Naive thymus-derived CD4-positive, alpha-beta T cell (primary cell): ENCODE measurements at regions of chr5 and their contacts with region 1.

Region 1: GRCh38 chr5:91225848-91226686 is 157.1 kb downstream of the ARRDC3 start:
- DNase-seq: peak; percentile 16 to 60 (median 46)
- ATAC-seq: peak; percentile 67
- H3K4me3 ChIP-seq: no peak overlapping the region
- H3K4me3 Mint-ChIP-seq: no peak overlapping the region
- H3K27ac ChIP-seq: no peak overlapping the region
- H3K27ac Mint-ChIP-seq: no peak overlapping the region
- H3K4me1 ChIP-seq: no peaks in the 10 kb centered on the region
- H3K4me1 Mint-ChIP-seq: no peaks in the 10 kb centered on the region
- H3K27me3 ChIP-seq: no peaks in the 10 kb centered on the region
- H3K27me3 Mint-ChIP-seq: peaks cover 0 to 15% (median 6%) of the 10 kb centered on the region in 5 donors

Region 2: DNA sequence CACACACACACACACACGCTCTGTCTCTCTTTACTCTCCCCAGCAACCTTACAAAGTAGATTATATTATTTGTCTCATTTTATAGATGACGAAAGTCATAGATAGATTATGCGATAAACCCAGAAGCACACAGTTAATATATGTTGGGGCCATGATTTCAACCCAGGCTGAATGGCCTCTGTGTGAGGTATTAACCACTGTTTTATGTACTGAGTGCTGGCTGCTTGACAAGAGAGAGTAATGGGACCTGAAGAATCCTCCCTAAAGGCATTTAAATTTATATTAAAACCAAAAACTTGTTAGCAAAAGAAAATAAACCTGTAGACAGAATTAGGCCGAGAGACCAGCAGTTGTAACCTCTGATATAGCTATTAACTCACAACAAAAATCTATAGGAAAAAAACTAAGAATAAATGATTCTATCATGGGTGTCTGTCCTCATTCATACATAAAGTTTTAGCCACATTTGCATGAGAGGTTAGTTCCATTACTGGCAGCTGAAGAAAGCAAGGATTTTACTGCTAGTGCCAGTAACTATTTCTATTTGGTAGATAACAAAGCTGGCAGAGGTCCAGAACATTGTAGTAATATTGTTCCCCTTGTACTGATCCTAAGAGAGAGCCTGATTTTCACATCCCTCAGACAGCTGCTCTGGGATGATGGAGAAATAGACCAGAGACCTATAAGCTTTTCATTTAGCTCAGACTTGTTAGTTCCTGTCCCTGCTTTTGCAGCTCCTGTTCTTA is 416.6 kb before region 1 on chr5:
- CTCF ChIA-PET with region 1: no interaction called
- POLR2A ChIA-PET with region 1: no interaction called
- intact Hi-C with region 1: no loop called
- DNase-seq: no peak
- ATAC-seq: no peak
- H3K4me3 ChIP-seq: no peak overlapping the region
- H3K4me3 Mint-ChIP-seq: no peak overlapping the region
- H3K27ac ChIP-seq: no peak overlapping the region
- H3K27ac Mint-ChIP-seq: no peak overlapping the region
- H3K4me1 ChIP-seq: no peaks in the 10 kb centered on the region
- H3K4me1 Mint-ChIP-seq: no peaks in the 10 kb centered on the region
- H3K27me3 ChIP-seq: no peaks in the 10 kb centered on the region
- H3K27me3 Mint-ChIP-seq: peaks cover 0 to 10% (median 0%) of the 10 kb centered on the region in 5 donors

Region 3: DNA sequence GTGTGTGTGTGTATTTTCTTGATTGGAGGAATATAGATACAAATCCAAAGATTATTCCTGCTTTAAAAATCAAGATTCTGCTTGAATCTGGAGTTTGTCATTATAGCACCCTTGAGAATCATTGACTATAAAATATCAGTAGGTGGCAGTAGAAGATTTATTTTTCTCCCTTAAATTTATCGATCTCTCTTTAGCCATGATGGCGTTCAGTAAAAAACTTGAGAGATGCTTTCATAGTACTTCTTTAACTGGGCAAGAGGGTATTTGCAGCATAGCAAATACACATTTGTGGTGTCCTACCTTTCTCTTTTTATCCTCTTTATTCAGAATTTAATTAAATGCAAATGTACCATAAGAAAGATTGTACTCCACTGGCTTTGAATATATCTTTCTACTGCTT is 359.7 kb before region 1 on chr5:
- CTCF ChIA-PET with region 1: interaction called, 3 read pairs
- POLR2A ChIA-PET with region 1: no interaction called
- intact Hi-C with region 1: loop called in 1 of 2 experiments (anchors 1 kb)
- DNase-seq: peak in 6 of 9 donors; percentile 11 to 49 (median 38)
- ATAC-seq: peak; percentile 60
- H3K4me3 ChIP-seq: no peak overlapping the region
- H3K4me3 Mint-ChIP-seq: no peak overlapping the region
- H3K27ac ChIP-seq: no peak overlapping the region
- H3K27ac Mint-ChIP-seq: no peak overlapping the region
- H3K4me1 ChIP-seq: peaks cover 0 to 6% of the 10 kb centered on the region in 2 donors
- H3K4me1 Mint-ChIP-seq: peaks cover 0 to 19% (median 9%) of the 10 kb centered on the region in 7 donors
- H3K27me3 ChIP-seq: no peaks in the 10 kb centered on the region
- H3K27me3 Mint-ChIP-seq: peaks cover 0 to 16% (median 4%) of the 10 kb centered on the region in 5 donors

Region 4: DNA sequence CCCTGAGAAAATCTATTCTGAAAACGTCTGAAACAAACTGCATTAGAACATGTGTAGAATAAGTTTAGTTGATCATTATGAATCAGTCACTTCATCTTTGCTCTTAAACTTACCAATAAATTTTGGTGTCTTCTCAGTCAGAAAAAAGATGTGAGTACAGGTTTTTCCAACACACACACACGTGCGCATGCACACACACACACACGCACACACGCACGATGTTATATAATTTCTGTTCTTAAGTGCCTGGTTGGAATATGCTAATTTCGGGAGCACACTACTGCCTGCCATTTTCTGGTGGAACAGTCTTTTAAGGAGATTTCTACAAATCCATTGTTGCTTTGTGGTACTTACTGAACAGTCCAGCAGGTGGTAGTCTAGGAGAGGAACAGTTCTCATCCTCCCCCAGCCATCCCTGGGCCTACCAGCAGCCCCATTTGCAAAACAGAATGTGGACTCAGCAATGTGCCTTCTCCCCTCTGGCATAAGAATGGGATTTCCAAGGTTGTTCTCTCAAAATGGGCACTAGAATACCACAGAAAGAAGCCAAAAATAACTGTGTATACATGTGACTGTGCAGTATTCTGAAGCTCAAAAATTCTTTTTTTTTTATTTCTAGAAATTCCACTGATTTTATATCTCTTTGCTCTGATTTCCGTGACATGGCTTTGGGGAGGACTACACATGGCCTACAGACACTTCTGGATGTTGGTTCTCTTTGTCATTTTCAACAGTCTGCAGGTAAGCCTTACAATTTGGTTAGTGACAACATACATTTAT is 124.3 kb before region 1 on chr5:
- CTCF ChIA-PET with region 1: no interaction called
- POLR2A ChIA-PET with region 1: no interaction called
- intact Hi-C with region 1: loop called (anchors 1 to 2 kb)
- DNase-seq: peak; percentile 18 to 50 (median 36)
- ATAC-seq: peak; percentile 95
- H3K4me3 ChIP-seq: no peak overlapping the region
- H3K4me3 Mint-ChIP-seq: no peak overlapping the region
- H3K27ac ChIP-seq: no peak overlapping the region
- H3K27ac Mint-ChIP-seq: peak overlapping the region in 2 of 9 donors; percentile 4 to 18
- H3K4me1 ChIP-seq: no peaks in the 10 kb centered on the region
- H3K4me1 Mint-ChIP-seq: peaks cover 0 to 4% (median 0%) of the 10 kb centered on the region in 7 donors
- H3K27me3 ChIP-seq: no peaks in the 10 kb centered on the region
- H3K27me3 Mint-ChIP-seq: peaks cover 0 to 26% (median 0%) of the 10 kb centered on the region in 5 donors

Region 5: GRCh38 chr5:91194824-91195381 is 31.2 kb before region 1 on chr5:
- CTCF ChIA-PET with region 1: no interaction called
- POLR2A ChIA-PET with region 1: no interaction called
- intact Hi-C with region 1: no loop called
- DNase-seq: no peak
- ATAC-seq: no peak
- H3K4me3 ChIP-seq: no peak overlapping the region
- H3K4me3 Mint-ChIP-seq: no peak overlapping the region
- H3K27ac ChIP-seq: no peak overlapping the region
- H3K27ac Mint-ChIP-seq: no peak overlapping the region
- H3K4me1 ChIP-seq: no peaks in the 10 kb centered on the region
- H3K4me1 Mint-ChIP-seq: no peaks in the 10 kb centered on the region
- H3K27me3 ChIP-seq: no peaks in the 10 kb centered on the region
- H3K27me3 Mint-ChIP-seq: peaks cover 0 to 29% (median 16%) of the 10 kb centered on the region in 5 donors

Region 6: DNA sequence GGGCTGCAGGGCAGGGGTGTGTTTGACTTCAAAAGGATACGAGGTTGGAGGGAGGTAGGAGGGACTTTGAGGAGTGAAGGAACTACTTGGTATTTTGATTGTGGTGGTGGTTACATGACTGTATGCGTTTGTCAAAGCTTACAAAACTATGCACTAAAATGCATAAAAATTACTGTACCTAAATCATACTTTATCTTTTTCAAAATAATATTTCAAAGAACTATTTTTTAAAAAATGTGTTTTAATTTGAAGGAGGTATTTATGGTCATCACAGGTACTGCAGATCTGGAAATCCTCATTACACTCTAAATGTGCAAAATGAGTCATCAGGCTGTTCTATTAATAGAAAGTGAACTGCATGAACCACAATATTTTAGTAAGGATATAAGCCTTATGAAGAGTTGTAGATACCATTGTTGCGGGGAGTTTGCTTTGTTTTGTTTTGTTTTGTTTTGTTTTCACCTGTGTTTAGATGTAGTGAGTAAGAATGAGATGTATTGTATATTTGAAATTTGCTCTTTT is 40.2 kb after region 1 on chr5:
- CTCF ChIA-PET with region 1: interaction called, 3 read pairs
- POLR2A ChIA-PET with region 1: no interaction called
- intact Hi-C with region 1: loop called in 1 of 2 experiments (anchors 5 kb)
- DNase-seq: no peak
- ATAC-seq: peak; percentile 53
- H3K4me3 ChIP-seq: no peak overlapping the region
- H3K4me3 Mint-ChIP-seq: no peak overlapping the region
- H3K27ac ChIP-seq: no peak overlapping the region
- H3K27ac Mint-ChIP-seq: no peak overlapping the region
- H3K4me1 ChIP-seq: no peaks in the 10 kb centered on the region
- H3K4me1 Mint-ChIP-seq: peaks cover 9 to 27% (median 18%) of the 10 kb centered on the region in 7 donors
- H3K27me3 ChIP-seq: no peaks in the 10 kb centered on the region
- H3K27me3 Mint-ChIP-seq: peaks cover 0 to 14% (median 0%) of the 10 kb centered on the region in 5 donors

Region 7: GRCh38 chr5:91311697-91312501 is 85.8 kb after region 1 on chr5:
- CTCF ChIA-PET with region 1: no interaction called
- POLR2A ChIA-PET with region 1: interaction called, 3 read pairs
- intact Hi-C with region 1: loop called (anchors 1 kb)
- DNase-seq: peak; percentile 17 to 81 (median 68)
- ATAC-seq: peak; percentile 86
- H3K4me3 ChIP-seq: peak overlapping the region; percentile 15
- H3K4me3 Mint-ChIP-seq: peak overlapping the region; percentile 59 to 82 (median 76)
- H3K27ac ChIP-seq: peak overlapping the region; percentile 53
- H3K27ac Mint-ChIP-seq: peak overlapping the region; percentile 84 to 98 (median 95)
- H3K4me1 ChIP-seq: peaks cover 33 to 39% of the 10 kb centered on the region in 2 donors
- H3K4me1 Mint-ChIP-seq: peaks cover 29 to 55% (median 48%) of the 10 kb centered on the region in 7 donors
- H3K27me3 ChIP-seq: no peaks in the 10 kb centered on the region
- H3K27me3 Mint-ChIP-seq: no peaks in the 10 kb centered on the region

Region 8: DNA sequence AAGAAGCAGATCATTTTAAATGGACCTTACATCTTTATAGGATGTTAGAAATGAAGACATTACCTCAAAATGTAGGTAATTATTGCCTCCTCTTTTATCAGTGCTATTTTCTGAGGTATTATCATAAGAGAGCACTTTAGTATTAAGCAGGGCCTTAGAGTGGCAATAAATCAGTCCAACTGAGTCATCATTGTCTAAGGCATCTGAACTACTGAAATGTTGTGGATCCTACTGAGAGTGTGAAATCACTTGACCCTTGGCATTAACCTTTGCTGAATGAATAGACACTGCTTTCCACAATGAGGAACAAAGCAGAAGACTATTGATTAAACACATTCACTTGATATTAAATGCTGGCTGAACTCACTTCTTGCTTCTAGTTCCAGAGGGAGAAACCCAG is 381.6 kb after region 1 on chr5:
- CTCF ChIA-PET with region 1: no interaction called
- POLR2A ChIA-PET with region 1: no interaction called
- intact Hi-C with region 1: no loop called
- DNase-seq: no peak
- ATAC-seq: no peak
- H3K4me3 ChIP-seq: no peak overlapping the region
- H3K4me3 Mint-ChIP-seq: no peak overlapping the region
- H3K27ac ChIP-seq: no peak overlapping the region
- H3K27ac Mint-ChIP-seq: no peak overlapping the region
- H3K4me1 ChIP-seq: no peaks in the 10 kb centered on the region
- H3K4me1 Mint-ChIP-seq: no peaks in the 10 kb centered on the region
- H3K27me3 ChIP-seq: no peaks in the 10 kb centered on the region
- H3K27me3 Mint-ChIP-seq: peaks cover 0 to 5% (median 3%) of the 10 kb centered on the region in 5 donors